ENCODE measurements at regions of chr9 and their contacts with region 1.

Region 1: DNA sequence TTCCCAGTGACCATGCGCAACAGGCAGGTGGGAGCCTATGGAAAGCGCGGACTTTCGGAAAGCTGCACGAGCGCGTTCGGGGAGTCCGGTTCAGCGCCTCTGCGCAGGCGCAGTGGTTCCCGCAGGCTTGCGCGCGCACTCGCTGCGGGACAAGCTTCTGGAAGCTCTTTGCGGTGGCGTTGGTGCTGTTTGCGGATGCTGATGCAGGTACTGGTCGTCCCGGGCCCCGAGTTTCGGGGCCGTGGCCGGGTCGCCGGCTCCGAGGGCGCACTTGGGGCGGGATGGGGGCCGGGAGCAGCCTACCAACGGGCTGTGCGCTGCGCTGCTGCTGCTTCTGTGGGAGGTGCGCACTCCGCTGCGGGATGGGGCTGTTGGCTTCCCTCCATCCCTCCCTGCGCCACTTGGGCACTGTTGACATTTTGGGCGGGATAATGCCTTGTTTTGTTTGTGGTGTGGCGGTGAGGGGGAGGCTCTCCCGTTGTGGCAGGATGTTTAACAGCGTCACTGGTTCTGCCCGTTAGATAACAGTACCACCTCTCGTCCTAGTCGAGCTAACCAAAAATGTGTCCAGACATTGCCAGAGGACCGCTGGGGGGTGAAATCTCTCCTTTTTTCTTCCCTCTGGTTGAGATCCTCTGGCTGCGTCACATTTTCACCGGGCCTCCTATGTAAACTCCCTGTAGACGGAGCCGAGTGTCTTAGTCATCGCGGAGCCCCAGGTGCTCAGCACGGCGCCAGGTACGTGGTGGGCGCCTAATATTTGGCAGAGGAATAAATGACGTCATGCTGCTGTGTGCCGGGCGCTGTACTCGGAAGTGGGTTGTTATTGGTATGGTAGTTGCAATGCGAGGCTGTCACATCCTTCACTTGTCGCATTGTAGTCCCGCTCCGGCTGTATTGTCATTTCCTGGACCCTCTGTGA is at the start of gene ZNF483:
- DNase-seq: peak; percentile 32
- ATAC-seq: peak; percentile 96
- H3K4me3 ChIP-seq: peak within 1 kb of the TSS; percentile 83 to 86
- H3K27ac ChIP-seq: peak within 1 kb of the TSS; percentile 68
- H3K4me1 ChIP-seq: no peaks in the 10 kb centered on the region
- H3K27me3 ChIP-seq: no peaks in the 10 kb centered on the region
- CTCF ChIP-seq: no peak
- total RNA-seq, gene ZNF483: 4.8 TPM

Region 2: DNA sequence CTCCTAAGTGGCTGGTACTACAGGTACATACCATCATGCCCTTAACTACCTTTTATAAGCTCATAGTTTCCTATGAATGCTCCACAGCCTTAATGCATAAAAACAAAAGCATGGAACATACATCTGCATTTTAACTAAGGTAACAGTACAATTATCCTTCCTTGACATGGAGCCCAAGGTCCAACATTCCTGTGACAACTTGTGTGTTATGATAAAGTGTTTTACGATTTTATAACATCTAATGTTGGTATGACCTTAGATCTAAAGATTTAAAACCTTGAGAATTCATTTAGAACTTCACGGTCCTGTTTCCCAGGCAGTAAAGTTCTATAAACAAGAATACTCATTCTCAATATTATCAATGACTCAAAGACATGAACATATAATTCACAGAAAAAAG is 179.2 kb after region 1 on chr9:
- CTCF ChIA-PET with region 1: no interaction called
- POLR2A ChIA-PET with region 1: interaction called, 10 read pairs
- in situ Hi-C with region 1: no loop called
- intact Hi-C with region 1: no loop called
- DNase-seq: no peak
- ATAC-seq: no peak
- H3K4me3 ChIP-seq: no peak overlapping the region
- H3K27ac ChIP-seq: no peak overlapping the region
- H3K4me1 ChIP-seq: no peaks in the 10 kb centered on the region
- H3K27me3 ChIP-seq: no peaks in the 10 kb centered on the region
- CTCF ChIP-seq: no peak

Measured in Panc1 (cell line).